Right cardiac atrium (tissue), 5 donors: ENCODE measurements at regions of chrX and their contacts with region 1.

Region 1: DNA sequence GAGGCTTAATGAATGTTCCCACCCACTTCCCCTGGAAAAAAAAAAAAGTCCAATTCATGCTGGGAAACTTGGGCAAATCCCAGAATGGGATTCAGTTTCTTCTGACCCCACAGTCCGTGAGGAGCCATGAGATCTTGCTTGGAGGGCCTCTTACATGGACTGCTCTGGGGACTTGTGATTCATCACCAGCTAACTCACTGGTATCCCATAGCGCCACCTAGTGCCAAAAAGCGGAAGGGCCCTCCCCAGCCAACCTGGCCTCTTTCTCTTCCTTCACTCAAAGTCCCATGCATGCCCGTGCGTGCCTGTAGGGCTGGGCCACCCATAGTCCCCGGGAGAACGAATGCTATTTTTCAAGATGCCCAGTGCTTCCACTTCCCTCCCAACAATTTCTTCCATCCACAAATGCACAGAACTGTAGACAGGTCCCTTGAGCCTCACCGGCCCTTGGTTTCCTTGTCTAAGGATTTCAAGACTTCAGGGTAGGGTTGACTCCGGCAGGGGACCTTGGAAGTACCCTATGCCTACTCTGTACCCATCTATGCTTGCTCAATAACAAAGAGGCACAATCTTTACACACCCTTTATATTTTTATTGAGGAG is 5.1 kb downstream of the RTL5 start:
- DNase-seq: peak; percentile 82 to 93 (median 91)
- ATAC-seq: peak; percentile 87 to 88
- H3K4me3 ChIP-seq: no peak overlapping the region
- H3K27ac ChIP-seq: peak overlapping the region; percentile 79
- H3K4me1 ChIP-seq: peaks cover 14% of the 10 kb centered on the region
- H3K27me3 ChIP-seq: no peaks in the 10 kb centered on the region

Region 2: GRCh38 chrX:71910986-71911730 is 215.5 kb before region 1 on chrX:
- intact Hi-C with region 1: loop called in 1 of 4 experiments (anchors 5 kb)
- DNase-seq: peak; percentile 32 to 68 (median 55)
- ATAC-seq: peak; percentile 68 to 70
- H3K4me3 ChIP-seq: peak overlapping the region; percentile 65
- H3K27ac ChIP-seq: no peak overlapping the region
- H3K4me1 ChIP-seq: no peaks in the 10 kb centered on the region
- H3K27me3 ChIP-seq: no peaks in the 10 kb centered on the region

Region 3: DNA sequence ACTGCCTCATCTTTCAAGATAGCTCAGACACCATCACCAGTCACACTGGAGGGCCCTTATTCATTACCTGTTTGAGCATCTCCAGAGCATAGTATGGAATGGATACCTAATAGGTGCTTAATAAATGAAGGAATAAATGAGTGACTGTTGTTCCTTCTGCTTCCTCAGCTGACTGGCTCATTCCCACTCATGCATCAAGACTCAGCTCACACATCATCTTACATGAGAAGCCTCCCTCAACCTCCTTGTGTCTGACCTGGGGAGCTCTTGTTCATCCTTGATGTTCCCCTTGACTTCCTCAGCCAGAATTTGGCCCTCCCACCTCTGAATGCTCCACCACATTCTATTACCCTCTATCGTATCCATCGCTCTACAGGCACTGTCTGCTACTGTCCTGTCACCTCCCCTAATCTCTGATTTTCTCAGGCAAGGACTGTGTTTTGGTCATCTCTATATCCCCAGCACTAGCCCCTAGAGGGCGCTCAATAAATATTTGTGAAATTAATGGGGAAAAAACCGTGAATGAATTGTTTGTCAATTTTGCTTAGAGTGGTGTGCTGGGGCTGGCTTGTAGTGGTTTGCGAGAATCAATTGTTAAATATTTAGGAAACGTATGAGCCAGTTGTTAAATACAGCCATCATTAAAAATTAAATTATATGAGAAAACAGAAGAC is 127.7 kb before region 1 on chrX:
- intact Hi-C with region 1: loop called in 2 of 4 experiments (anchors 5 kb)
- DNase-seq: no peak
- ATAC-seq: no peak
- H3K4me3 ChIP-seq: no peak overlapping the region
- H3K27ac ChIP-seq: no peak overlapping the region
- H3K4me1 ChIP-seq: peaks cover 4% of the 10 kb centered on the region
- H3K27me3 ChIP-seq: no peaks in the 10 kb centered on the region

Region 4: DNA sequence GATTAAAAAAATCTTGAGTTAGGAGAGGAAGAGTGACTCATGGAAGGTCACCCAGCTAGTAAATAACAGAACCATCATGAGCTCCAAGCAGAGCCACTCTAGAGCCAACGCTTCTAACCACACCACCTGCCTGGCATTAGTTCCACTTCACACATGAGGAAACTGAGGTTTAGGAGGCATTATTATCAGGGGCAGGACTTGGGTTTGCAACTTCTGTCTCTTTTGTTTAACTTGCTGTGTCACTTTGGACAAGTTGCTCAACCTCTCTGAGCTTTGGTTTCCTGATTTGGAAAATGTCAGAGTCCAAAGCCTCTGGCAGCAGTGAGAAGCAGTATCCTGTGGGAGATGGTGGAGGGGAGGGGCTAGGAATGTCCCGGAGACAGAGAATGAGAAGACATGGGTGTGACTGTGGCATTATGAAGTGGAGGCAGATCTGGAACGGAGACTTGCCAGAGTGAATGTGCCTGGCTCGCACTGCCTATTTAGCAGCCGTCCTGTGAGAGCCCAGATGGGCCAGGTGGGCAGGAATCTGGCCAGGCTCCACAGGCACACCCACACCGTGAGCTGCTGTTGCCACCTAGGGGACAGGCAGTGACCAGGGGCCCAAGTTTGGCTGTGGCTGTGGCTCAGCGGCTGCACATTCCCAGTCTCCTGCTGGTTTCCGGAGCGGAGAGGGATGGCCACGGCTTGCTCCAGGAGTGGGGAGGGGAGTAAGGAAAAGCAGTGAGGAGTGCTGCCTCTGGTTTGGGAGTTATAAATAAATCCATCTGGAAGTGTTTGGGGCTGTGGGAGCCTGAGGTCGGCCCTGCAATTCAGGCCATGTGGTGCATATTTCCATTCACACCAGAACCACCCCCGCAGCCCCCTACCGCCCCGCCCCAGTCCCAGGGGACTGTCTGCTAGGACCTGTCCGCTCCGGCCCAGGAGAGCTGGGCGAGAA is 122.6 kb before region 1 on chrX:
- intact Hi-C with region 1: loop called in 2 of 4 experiments (anchors 5 kb)
- DNase-seq: peak; percentile 46 to 80 (median 73)
- ATAC-seq: peak; percentile 75 to 88
- H3K4me3 ChIP-seq: no peak overlapping the region
- H3K27ac ChIP-seq: peak overlapping the region; percentile 5
- H3K4me1 ChIP-seq: no peaks in the 10 kb centered on the region
- H3K27me3 ChIP-seq: no peaks in the 10 kb centered on the region

Region 5: GRCh38 chrX:72018277-72019112 is 108.1 kb before region 1 on chrX:
- intact Hi-C with region 1: loop called in 3 of 4 experiments (anchors 2 to 10 kb)
- DNase-seq: peak; percentile 88 to 95 (median 94)
- ATAC-seq: peak; percentile 97 to 98
- H3K4me3 ChIP-seq: peak overlapping the region; percentile 9
- H3K27ac ChIP-seq: no peak overlapping the region
- H3K4me1 ChIP-seq: peaks cover under 1% of the 10 kb centered on the region
- H3K27me3 ChIP-seq: no peaks in the 10 kb centered on the region